GM10248 (cell line): ENCODE measurements at regions of chr22 and their contacts with region 1.

Region 1: GRCh38 chr22:33038131-33038772 is 19.9 kb downstream of the SYN3 start:
- DNase-seq: no peak
- CTCF ChIP-seq: no peak

Region 2: DNA sequence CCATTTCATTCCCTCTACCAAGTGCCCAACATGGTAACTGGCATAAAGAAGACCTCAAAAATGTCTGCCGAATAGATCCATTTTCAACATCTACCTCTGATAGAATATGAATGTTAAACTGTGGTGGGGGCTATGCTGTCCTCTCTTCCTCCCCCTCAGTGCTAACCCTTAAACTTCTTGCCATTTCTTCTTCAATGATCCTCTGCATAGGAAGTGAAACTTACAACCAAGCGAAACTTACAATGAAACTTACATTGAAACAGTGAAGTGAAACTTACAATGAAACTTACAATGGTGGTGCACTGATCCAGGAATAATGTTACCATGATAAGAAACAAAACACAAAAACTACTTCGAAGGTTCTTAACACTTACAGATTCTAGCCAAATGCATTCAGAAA is 630.9 kb before region 1 on chr22:
- CTCF ChIA-PET with region 1: no interaction called
- POLR2A ChIA-PET with region 1: no interaction called
- DNase-seq: no peak
- CTCF ChIP-seq: no peak

Region 3: GRCh38 chr22:33049119-33049729 is 11.0 kb after region 1 on chr22:
- CTCF ChIA-PET with region 1: interaction called, 17 read pairs
- POLR2A ChIA-PET with region 1: no interaction called
- DNase-seq: peak; percentile 75
- CTCF ChIP-seq: peak; percentile 79

Region 4: GRCh38 chr22:33314316-33314715 is 276.1 kb after region 1 on chr22:
- CTCF ChIA-PET with region 1: no interaction called
- POLR2A ChIA-PET with region 1: interaction called, 10 read pairs
- DNase-seq: no peak
- CTCF ChIP-seq: no peak